ENCODE measurements at regions of chr11 and their contacts with region 1.

Region 1: DNA sequence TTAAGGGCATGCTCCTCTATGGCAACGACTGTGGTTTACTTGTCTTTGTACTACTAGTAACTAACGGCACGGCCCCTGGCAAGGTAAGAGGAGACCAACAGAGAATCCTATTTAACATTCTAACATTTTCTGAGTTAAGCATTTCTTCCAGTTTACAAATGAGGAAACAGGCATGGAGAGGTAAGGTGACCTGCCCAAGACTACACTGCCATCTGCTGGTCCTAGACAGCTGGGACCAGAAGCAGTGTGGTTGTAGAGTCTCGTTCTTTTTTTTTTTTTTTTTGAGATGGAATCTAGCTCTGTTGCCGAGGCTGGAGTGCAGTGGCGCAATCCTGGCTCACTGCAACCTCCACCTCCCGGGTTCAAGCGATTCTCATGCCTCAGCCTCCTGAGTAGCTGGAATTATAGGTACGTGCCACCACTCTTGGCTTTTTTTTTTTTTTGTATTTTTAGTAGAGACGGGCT is 5.3 kb upstream of the RAPSN start:
- DNase-seq: peak; percentile 67 to 72
- H3K4me3 ChIP-seq: no peak overlapping the region
- H3K27ac ChIP-seq: no peak overlapping the region
- H3K4me1 ChIP-seq: no peaks in the 10 kb centered on the region
- H3K27me3 ChIP-seq: no peaks in the 10 kb centered on the region
- CTCF ChIP-seq: peak; percentile 79

Region 2: DNA sequence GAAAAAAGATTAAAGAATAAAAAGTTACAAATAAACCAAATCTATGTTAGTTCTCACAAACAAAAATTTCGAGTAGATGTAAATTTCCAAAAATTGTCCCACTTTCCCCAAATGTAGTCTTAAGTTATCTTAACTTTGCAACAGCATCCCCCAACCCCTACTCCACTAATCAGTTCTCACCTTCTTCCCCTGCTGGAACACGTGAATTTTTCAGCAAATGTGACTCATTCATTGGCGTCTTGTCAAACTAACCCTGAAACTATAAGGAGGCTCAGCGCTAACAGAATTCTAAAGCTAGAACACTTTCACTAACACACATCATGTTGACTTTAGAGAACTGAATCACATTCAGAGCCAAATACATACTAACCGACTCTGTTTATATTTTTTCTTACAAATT is 1379.0 kb before region 1 on chr11:
- CTCF ChIA-PET with region 1: interaction called, 23 read pairs
- POLR2A ChIA-PET with region 1: no interaction called
- intact Hi-C with region 1: no loop called
- DNase-seq: no peak
- H3K4me3 ChIP-seq: no peak overlapping the region
- H3K27ac ChIP-seq: no peak overlapping the region
- H3K4me1 ChIP-seq: no peaks in the 10 kb centered on the region
- H3K27me3 ChIP-seq: no peaks in the 10 kb centered on the region
- CTCF ChIP-seq: no peak

Region 3: DNA sequence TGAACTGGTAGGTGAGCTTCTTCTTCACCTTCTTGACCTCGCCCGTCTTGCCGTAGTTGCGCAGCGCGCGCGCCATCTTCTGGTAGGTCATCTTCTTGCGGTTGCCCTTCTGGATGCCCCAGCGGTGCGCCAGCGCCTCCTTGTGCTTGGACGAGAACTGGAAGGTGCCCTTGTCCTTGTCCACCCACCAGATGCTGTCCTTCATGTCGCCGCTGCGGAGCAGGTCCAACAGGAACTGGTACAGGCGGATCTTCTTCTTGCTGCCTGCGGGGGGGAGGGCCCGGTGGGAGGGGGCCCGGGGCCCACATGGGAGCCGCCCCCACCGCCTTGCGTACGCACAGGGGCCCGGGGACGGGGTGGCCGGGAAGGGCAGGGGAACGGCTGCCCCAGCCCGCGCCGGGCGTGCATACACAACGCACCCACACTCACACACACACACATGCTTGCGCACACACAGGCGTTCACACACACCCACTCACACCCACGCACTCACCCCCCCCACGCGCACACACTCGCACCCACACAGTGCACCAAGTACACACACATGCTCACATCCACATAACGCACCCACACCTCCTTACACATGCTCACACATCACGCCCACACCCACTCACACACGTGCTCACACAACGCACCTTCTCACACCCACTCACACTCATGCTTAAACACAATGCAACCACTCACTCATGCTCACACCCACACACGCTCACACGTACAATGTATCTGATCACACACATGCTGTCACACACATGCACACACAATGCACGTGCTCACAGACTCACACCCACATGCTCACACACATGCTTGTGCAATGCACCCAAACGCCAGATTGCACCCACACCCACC is 98.7 kb before region 1 on chr11:
- CTCF ChIA-PET with region 1: no interaction called
- POLR2A ChIA-PET with region 1: no interaction called
- intact Hi-C with region 1: loop called (anchors 1 kb)
- DNase-seq: peak; percentile 88 to 99
- H3K4me3 ChIP-seq: peak overlapping the region; percentile 30; the same call in 1 of the 2 replicates
- H3K27ac ChIP-seq: no peak overlapping the region
- H3K4me1 ChIP-seq: no peaks in the 10 kb centered on the region
- H3K27me3 ChIP-seq: no peaks in the 10 kb centered on the region
- CTCF ChIP-seq: peak; percentile 98

Region 4: DNA sequence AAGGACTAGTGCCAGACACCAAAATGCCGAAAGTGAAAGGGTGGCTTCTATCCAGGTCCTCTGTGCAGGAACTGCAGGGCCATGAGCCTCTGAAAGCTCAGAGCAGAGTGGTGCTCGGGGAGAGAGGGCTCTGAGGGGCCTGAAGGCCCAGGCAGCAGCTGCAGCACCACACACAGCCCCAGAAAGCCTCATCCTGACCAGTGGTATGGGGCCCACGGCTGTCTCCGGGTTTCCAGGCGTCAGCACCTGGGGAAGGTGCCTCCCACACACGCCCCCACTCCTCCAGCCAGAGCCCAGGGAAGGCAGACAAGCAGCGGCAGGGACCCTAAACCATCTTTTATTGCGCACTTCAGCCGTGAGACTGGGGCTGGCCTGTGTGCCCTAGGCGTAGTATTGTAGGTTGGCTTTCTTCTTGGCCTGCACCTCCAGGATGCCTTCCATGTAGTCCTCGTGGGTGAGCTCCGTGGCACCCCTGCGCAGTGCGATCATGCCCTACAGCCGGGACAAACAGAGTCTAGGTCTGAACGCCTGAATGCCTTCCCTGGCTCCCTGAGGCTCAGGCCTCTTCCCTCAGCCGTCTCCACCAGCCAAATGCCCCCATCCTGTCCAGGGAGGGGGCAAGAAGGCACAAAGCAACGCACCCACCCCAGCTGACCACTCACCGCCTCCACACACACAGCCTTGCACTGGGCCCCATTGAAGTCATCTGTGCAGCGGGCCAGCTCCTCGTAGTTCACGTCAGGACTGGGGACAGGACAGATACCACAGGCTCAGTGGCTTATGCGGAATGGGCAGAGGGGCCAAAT is 35.6 kb before region 1 on chr11:
- CTCF ChIA-PET with region 1: interaction called, 12 read pairs
- POLR2A ChIA-PET with region 1: no interaction called
- intact Hi-C with region 1: no loop called
- DNase-seq: no peak
- H3K4me3 ChIP-seq: no peak overlapping the region
- H3K27ac ChIP-seq: no peak overlapping the region
- H3K4me1 ChIP-seq: peaks cover 17% of the 10 kb centered on the region
- H3K27me3 ChIP-seq: no peaks in the 10 kb centered on the region
- CTCF ChIP-seq: no peak

Region 5: DNA sequence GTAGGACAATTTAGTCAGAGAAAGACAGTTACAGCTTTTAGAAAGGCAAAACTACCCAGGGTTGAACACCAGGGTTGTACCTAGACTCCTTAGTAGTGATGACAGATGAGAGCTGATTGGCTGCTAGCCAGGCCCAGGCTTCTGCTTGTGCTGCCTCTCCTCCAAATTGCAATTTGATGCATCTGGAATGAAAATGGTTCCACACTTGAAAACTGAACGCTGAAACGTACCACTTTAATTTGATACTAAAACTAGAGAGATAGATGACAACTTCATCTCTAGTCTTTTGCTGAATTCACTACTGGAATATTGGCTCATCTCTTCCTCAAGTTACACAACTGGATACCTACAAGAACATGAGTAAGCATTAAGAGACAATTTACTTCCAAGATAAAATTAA is 332.2 kb after region 1 on chr11:
- CTCF ChIA-PET with region 1: interaction called, 14 read pairs
- POLR2A ChIA-PET with region 1: no interaction called
- intact Hi-C with region 1: no loop called
- DNase-seq: no peak
- H3K4me3 ChIP-seq: no peak overlapping the region
- H3K27ac ChIP-seq: no peak overlapping the region
- H3K4me1 ChIP-seq: no peaks in the 10 kb centered on the region
- H3K27me3 ChIP-seq: no peaks in the 10 kb centered on the region
- CTCF ChIP-seq: no peak

Measured in PC-9 (cell line).